ENCODE measurements at regions of chr9 and their contacts with region 1.

Region 1: DNA sequence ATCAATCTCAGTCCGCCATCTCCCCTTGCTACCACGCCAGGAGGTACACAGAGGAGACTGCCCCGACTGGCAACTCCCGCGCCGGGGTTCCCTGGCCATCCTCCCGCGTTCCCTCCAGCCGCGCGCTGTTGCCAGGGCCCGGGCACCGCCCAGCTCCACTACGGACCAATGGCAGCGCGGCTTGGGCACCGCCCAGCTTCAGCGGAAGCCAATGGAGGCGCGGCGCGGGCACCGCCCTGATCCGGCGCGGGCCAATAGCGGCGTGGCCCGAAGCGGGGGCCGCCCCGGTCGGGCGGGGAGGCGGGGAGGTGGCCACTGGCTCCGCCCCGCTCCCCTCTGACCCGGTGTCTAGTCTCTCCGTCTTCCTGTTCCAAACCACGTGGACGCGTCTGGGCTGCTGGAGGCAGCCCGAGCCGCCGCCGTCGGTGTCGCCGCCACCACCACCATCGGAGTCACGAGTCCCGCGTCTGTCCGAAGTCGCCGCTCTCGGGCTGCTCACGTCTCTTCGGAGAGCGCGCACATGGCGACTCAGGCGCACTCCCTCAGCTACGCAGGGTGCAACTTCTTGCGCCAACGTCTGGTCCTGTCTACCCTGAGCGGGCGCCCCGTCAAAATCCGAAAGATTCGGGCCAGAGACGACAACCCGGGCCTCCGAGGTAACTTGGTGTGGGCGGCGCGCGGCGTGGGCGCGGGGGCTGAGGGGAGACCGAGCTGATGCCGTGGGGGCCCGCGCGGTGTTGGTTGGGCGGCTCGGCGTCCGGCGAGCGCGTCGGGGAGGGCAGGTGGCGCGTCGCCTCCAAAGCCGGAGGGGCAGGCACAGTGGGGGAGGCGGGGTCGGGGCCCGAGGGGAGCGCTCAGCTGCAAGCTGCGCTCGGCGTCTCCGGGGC is at the start of gene RCL1:
- DNase-seq: peak; percentile 95 to 98 (median 96)
- H3K4me3 ChIP-seq: peak within 1 kb of the TSS; percentile 87
- H3K27ac ChIP-seq: peak within 1 kb of the TSS; percentile 42 to 71
- H3K4me1 ChIP-seq: peaks cover 8% of the 10 kb centered on the region
- H3K27me3 ChIP-seq: no peaks in the 10 kb centered on the region
- CTCF ChIP-seq: no peak
- EP300 ChIP-seq: no peak
- POLR2A ChIP-seq: peak; percentile 62
- total RNA-seq, gene RCL1: 28.0 to 68.6 (median 32.7) TPM

Region 2: DNA sequence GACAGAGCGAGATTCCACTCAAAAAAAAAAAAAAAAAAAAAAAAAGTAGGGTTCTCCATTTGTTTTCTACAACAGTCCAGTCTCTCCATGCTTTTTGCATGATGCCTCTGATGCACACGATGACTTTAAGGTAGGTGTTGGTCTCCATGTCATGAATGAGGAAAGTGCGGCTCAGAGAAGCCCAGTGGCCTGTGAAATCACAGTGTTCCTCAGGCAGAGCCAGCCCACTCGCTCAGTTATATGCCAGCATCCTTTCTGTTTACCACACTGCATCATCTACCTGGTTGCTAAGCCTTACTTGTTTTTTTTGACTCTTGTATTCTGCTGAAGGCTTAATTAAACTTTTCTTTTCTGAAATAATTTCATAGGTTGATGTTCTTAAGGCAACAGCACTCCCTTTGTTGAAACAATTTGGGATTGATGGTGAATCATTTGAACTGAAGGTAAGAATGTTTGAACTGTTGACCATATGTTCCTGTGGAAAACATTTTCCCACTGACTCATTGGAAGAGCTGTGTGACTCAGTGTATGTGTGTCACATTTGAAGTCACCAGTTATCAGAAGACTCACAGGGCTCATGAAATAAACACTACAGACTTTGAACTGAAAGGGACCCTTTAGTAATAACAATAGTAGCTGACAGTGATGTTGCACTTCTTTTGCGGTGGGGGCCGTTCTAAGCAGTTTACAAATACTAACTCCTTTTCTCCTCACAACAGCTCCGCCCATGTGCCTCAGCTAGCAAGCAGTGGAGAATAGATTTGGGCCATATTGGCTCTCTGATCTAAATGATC is 40.2 kb after region 1 on chr9:
- intact Hi-C with region 1: loop called in 1 of 4 experiments (anchors 5 kb)
- DNase-seq: no peak
- H3K4me3 ChIP-seq: no peak overlapping the region
- H3K27ac ChIP-seq: peak overlapping the region in 1 of 2 donors; percentile 6
- H3K4me1 ChIP-seq: peaks cover 32% of the 10 kb centered on the region
- H3K27me3 ChIP-seq: no peaks in the 10 kb centered on the region
- CTCF ChIP-seq: no peak
- EP300 ChIP-seq: no peak
- POLR2A ChIP-seq: no peak

Region 3: GRCh38 chr9:4855841-4856240 is 63.0 kb after region 1 on chr9:
- intact Hi-C with region 1: loop called in 1 of 4 experiments (anchors 10 kb)
- DNase-seq: peak in 4 of 5 donors; percentile 37 to 60 (median 44)
- H3K4me3 ChIP-seq: no peak overlapping the region
- H3K27ac ChIP-seq: peak overlapping the region in 1 of 2 donors; percentile 27
- H3K4me1 ChIP-seq: peaks cover 6% of the 10 kb centered on the region
- H3K27me3 ChIP-seq: no peaks in the 10 kb centered on the region
- CTCF ChIP-seq: no peak
- EP300 ChIP-seq: no peak
- POLR2A ChIP-seq: no peak